Activated T-helper 1 cell treated with anti-CD3 and anti-CD28 coated beads, Interleukin-12 subunit alpha, Interleukin-12 subunit beta, Interleukin-2, Interleukin-4 antibody, amounts not matched to agents 30 ng/mL and 10 ng/mL and 1 ng/mL, durations not matched to agents 14 hours and 24 hours and 36 hours (primary cell): ENCODE measurements at regions of chr7 and their contacts with region 1.

Region 1: DNA sequence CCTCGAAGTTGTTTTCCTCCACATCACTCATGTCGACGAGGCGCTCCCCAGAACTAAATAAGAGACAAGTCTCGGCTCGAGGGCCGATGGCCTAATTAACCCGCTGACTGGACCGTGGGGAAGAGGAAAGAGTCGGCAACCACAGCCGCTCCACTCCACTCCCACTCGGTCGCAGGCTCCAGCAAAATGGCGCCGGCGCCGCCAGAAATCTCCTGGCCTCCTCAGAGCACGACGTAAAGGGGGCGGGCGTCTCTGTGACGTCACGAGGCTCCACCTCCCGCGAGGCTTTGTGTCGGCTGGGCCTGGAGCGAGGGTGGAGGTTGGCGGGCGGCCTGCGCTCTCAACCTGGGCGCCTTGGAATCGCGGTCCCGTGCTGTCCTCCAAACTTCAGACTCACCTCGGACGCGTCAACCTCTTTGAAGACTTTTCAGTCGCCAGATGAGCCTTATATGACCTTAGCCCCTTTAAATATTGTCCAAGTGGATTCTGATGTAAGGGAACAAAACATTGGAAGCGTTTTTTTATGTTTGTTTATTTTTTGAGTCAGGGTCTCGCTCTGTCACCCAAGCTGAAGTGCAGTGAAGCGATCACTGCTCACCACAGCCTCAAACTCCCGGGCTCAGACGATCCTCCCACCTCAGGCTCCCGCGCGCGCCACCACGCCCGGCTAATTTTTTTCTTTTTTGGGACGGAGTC is at the start of gene TRA2A:
- DNase-seq: peak; percentile 95
- H3K4me3 Mint-ChIP-seq: peak within 1 kb of the TSS; percentile 99
- H3K27ac Mint-ChIP-seq: peak within 1 kb of the TSS; percentile 100
- H3K4me1 Mint-ChIP-seq: peaks cover 41% of the 10 kb centered on the region
- H3K27me3 Mint-ChIP-seq: no peaks in the 10 kb centered on the region
- total RNA-seq, gene TRA2A: 98.6 and 103 TPM in 2 replicates

Region 2: GRCh38 chr7:23181684-23182553 is 350.0 kb before region 1 on chr7 and contains the start of gene NUP42:
- intact Hi-C with region 1: loop called (anchors 2 kb)
- DNase-seq: peak; percentile 96
- H3K4me3 Mint-ChIP-seq: peak within 1 kb of the TSS; percentile 90
- H3K27ac Mint-ChIP-seq: peak within 1 kb of the TSS; percentile 99
- H3K4me1 Mint-ChIP-seq: peaks cover 35% of the 10 kb centered on the region
- H3K27me3 Mint-ChIP-seq: peaks cover 8% of the 10 kb centered on the region
- total RNA-seq, gene NUP42: 52.7 and 55.2 TPM in 2 replicates

Region 3: DNA sequence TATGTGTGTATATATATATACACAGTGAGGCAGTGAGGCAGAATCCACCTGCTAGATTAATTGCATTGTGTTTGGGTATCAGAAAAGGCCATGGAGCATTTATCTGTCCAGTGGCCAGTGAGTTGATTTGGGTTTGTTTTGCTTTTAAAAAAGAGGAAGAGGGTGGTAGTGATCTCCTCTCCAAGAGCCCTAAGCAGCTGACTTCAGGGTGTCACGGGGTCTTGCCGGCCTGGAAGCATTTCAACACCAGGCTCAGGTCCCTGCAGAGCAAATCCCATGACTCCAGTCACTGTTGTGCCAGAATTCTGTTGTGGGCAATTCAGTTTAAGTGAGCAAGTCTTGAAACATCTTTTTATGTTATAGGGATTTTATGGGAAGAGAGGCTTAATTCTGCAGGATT is 315.9 kb before region 1 on chr7:
- intact Hi-C with region 1: no loop called
- DNase-seq: no peak
- H3K4me3 Mint-ChIP-seq: no peak overlapping the region
- H3K27ac Mint-ChIP-seq: no peak overlapping the region
- H3K4me1 Mint-ChIP-seq: no peaks in the 10 kb centered on the region
- H3K27me3 Mint-ChIP-seq: peaks cover 13% of the 10 kb centered on the region

Region 4: GRCh38 chr7:23357190-23358093 is 174.5 kb before region 1 on chr7:
- intact Hi-C with region 1: loop called (anchors 2 kb)
- DNase-seq: no peak
- H3K4me3 Mint-ChIP-seq: peak overlapping the region; percentile 49
- H3K27ac Mint-ChIP-seq: peak overlapping the region; percentile 49
- H3K4me1 Mint-ChIP-seq: peaks cover 26% of the 10 kb centered on the region
- H3K27me3 Mint-ChIP-seq: peaks cover 48% of the 10 kb centered on the region

Region 5: GRCh38 chr7:23474094-23474828 is 57.7 kb before region 1 on chr7:
- intact Hi-C with region 1: loop called (anchors 1 kb)
- DNase-seq: peak; percentile 89
- H3K4me3 Mint-ChIP-seq: peak overlapping the region; percentile 83
- H3K27ac Mint-ChIP-seq: peak overlapping the region; percentile 57
- H3K4me1 Mint-ChIP-seq: peaks cover 39% of the 10 kb centered on the region
- H3K27me3 Mint-ChIP-seq: peaks cover 63% of the 10 kb centered on the region

Region 6: GRCh38 chr7:23546897-23547572 is 15.1 kb after region 1 on chr7:
- intact Hi-C with region 1: loop called (anchors 2 kb)
- DNase-seq: peak; percentile 63
- H3K4me3 Mint-ChIP-seq: no peak overlapping the region
- H3K27ac Mint-ChIP-seq: no peak overlapping the region
- H3K4me1 Mint-ChIP-seq: peaks cover 21% of the 10 kb centered on the region
- H3K27me3 Mint-ChIP-seq: peaks cover 2% of the 10 kb centered on the region

Region 7: DNA sequence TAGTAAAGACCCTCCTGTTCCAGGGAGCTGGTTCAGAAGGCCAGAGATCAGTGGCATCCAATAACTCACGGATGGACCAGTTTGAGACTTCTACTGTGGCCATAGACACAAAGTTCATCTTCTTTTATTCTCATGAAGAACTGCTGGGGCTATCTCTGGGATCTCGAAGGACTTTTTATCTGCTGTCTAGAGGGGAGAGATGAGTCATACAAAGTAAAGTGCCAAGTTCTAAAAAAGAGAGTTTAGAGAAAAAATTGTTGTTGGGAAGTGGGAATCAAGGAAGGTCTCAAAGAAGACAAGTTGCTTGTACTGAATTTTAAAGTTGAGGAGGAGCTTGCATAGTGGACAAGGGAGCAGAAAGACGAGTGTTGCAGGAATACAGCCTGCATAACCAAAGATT is 140.1 kb after region 1 on chr7:
- intact Hi-C with region 1: no loop called
- DNase-seq: no peak
- H3K4me3 Mint-ChIP-seq: no peak overlapping the region
- H3K27ac Mint-ChIP-seq: no peak overlapping the region
- H3K4me1 Mint-ChIP-seq: no peaks in the 10 kb centered on the region
- H3K27me3 Mint-ChIP-seq: peaks cover 29% of the 10 kb centered on the region

Region 8: GRCh38 chr7:25125137-25125946 is 1593.4 kb after region 1 on chr7 and contains the start of gene CYCS:
- intact Hi-C with region 1: loop called (anchors 10 kb)
- DNase-seq: peak; percentile 100
- H3K4me3 Mint-ChIP-seq: peak within 1 kb of the TSS; percentile 93
- H3K27ac Mint-ChIP-seq: peak within 1 kb of the TSS; percentile 99
- H3K4me1 Mint-ChIP-seq: peaks cover 29% of the 10 kb centered on the region
- H3K27me3 Mint-ChIP-seq: no peaks in the 10 kb centered on the region
- total RNA-seq, gene CYCS: 280 TPM in 2 replicates